CD8-positive, alpha-beta memory T cell (primary cell): ENCODE measurements at regions of chr19 and their contacts with region 1.

Region 1: GRCh38 chr19:40777937-40778705 is at the start of gene RAB4B:
- DNase-seq: peak; percentile 100
- H3K4me3 ChIP-seq: peak within 1 kb of the TSS; percentile 98
- H3K4me3 Mint-ChIP-seq: peak within 1 kb of the TSS; percentile 88 to 98 (median 92)
- H3K27ac ChIP-seq: peak within 1 kb of the TSS; percentile 95
- H3K27ac Mint-ChIP-seq: peak within 1 kb of the TSS; percentile 95 to 99 (median 98)
- H3K4me1 ChIP-seq: peaks cover 31% of the 10 kb centered on the region
- H3K4me1 Mint-ChIP-seq: peaks cover 33 to 46% (median 36%) of the 10 kb centered on the region in 3 donors
- H3K27me3 ChIP-seq: no peaks in the 10 kb centered on the region
- H3K27me3 Mint-ChIP-seq: peaks cover 0 to 1% of the 10 kb centered on the region in 2 donors
- total RNA-seq, gene RAB4B: 24.2 to 27.2 TPM

Region 2: GRCh38 chr19:40716655-40717324 is 61.3 kb before region 1 on chr19 and contains the starts of genes COQ8B and ITPKC:
- CTCF ChIA-PET with region 1: no interaction called
- POLR2A ChIA-PET with region 1: interaction called, 19 read pairs
- DNase-seq: peak; percentile 98 to 100 (median 99)
- H3K4me3 ChIP-seq: peak within 1 kb of the TSS; percentile 99
- H3K4me3 Mint-ChIP-seq: peak within 1 kb of the TSS; percentile 87 to 97 (median 91)
- H3K27ac ChIP-seq: peak within 1 kb of the TSS; percentile 98
- H3K27ac Mint-ChIP-seq: peak within 1 kb of the TSS; percentile 93 to 100 (median 98)
- H3K4me1 ChIP-seq: peaks cover 59% of the 10 kb centered on the region
- H3K4me1 Mint-ChIP-seq: peaks cover 58 to 81% (median 72%) of the 10 kb centered on the region in 3 donors
- H3K27me3 ChIP-seq: no peaks in the 10 kb centered on the region
- H3K27me3 Mint-ChIP-seq: peaks cover 0 to 2% of the 10 kb centered on the region in 2 donors
- total RNA-seq, gene COQ8B: 20.6 to 25.7 TPM
- total RNA-seq, gene ITPKC: 5.5 to 5.7 TPM

Region 3: GRCh38 chr19:40798223-40798996 is 20.3 kb after region 1 on chr19:
- CTCF ChIA-PET with region 1: interaction called, 38 read pairs
- POLR2A ChIA-PET with region 1: interaction called, 72 read pairs
- DNase-seq: peak; percentile 100
- H3K4me3 ChIP-seq: peak overlapping the region; percentile 66
- H3K4me3 Mint-ChIP-seq: peak overlapping the region; percentile 90 to 99 (median 97)
- H3K27ac ChIP-seq: peak overlapping the region; percentile 93
- H3K27ac Mint-ChIP-seq: peak overlapping the region; percentile 98 to 100 (median 100)
- H3K4me1 ChIP-seq: peaks cover 44% of the 10 kb centered on the region
- H3K4me1 Mint-ChIP-seq: peaks cover 36 to 51% (median 41%) of the 10 kb centered on the region in 3 donors
- H3K27me3 ChIP-seq: no peaks in the 10 kb centered on the region
- H3K27me3 Mint-ChIP-seq: no peaks in the 10 kb centered on the region

Region 4: DNA sequence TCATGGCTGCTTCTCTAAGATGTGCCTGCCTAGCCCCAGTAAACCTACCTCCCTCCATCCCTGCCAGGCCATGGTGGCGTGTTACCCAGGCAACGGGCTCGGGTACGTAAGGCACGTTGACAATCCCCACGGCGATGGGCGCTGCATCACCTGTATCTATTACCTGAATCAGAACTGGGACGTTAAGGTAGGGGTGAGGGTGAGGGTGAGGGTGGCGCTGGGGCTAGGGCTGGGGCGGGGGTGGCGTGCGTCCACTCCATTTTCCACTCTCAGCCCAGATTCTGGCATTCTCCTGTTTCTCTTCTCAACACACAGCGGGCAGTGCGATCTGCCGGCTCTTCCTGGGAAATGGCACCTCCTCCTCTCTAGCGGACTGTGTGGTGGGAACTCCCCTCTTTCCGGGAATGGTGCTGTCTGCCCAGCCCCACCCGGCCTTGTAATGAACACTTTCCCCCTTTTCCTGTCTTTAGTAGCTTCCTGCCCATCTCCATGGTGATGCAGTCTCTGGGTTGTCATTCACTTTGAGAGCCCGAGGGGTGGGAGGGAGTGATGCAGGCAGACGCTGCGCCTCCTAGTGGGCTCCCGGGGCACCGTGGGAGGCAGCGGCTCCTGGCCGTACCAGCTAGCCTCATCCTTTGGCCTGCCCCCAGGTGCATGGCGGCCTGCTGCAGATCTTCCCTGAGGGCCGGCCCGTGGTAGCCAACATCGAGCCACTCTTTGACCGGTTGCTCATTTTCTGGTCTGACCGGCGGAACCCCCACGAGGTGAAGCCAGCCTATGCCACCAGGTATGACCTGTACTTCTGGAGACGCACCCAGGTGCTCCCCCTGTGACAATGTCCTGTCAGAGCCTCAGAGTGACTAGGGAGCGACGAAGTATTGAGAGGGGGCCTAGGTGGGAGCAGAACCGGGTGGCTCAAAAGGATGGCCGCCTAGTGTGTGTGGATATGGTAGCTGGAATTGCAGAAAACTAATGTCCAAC is 28.7 kb after region 1 on chr19:
- CTCF ChIA-PET with region 1: interaction called, 38 read pairs
- POLR2A ChIA-PET with region 1: interaction called, 34 read pairs
- DNase-seq: peak; percentile 76 to 86 (median 83)
- H3K4me3 ChIP-seq: peak overlapping the region; percentile 46
- H3K4me3 Mint-ChIP-seq: peak overlapping the region; percentile 60 to 91 (median 82)
- H3K27ac ChIP-seq: peak overlapping the region; percentile 79
- H3K27ac Mint-ChIP-seq: peak overlapping the region; percentile 93 to 100 (median 98)
- H3K4me1 ChIP-seq: peaks cover 80% of the 10 kb centered on the region
- H3K4me1 Mint-ChIP-seq: peaks cover 76 to 86% (median 85%) of the 10 kb centered on the region in 3 donors
- H3K27me3 ChIP-seq: no peaks in the 10 kb centered on the region
- H3K27me3 Mint-ChIP-seq: no peaks in the 10 kb centered on the region

Region 5: DNA sequence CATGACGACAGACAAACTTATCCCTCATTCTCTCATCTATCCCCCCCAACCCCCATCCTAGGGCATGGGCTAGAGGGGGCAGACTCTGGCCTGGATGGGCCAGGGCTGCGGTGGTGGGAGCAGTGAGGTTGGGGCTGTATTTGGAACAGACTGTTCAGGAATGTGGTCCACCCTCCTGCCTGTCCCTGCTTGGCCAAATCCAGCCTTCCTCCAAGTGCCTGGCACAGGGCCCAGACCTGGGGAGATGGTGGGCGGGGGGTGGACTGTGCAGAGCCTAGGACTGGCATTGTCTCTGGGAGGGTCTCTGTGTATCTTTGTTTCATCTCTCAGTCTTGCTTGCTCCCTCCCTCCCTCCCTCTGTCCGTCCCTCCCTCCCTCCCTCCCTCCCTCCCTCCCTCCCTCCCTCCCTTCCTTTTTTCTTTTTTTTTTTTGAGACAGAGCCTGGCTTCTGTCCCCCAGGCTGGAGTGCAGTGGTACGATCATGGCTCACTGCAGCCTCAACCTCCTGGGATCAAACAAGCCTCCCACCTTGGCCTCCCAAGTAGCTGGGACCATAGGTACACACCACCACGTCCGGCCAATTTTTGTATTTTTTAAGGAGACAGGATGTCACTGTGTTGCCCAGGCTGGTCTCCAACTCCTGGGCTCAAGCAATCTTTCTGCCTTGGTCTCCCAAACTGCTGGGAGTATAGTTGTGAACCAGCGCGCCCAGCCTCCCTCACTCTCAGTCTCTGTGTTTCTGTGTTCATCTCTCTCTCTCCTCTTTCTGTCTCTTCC is 35.2 kb after region 1 on chr19:
- CTCF ChIA-PET with region 1: interaction called, 38 read pairs
- POLR2A ChIA-PET with region 1: interaction called, 3 read pairs
- DNase-seq: no peak
- H3K4me3 ChIP-seq: no peak overlapping the region
- H3K4me3 Mint-ChIP-seq: peak overlapping the region in 3 of 7 donors; percentile 87 to 92 (median 90)
- H3K27ac ChIP-seq: no peak overlapping the region
- H3K27ac Mint-ChIP-seq: peak overlapping the region in 6 of 8 donors; percentile 25 to 86 (median 34)
- H3K4me1 ChIP-seq: peaks cover 28% of the 10 kb centered on the region
- H3K4me1 Mint-ChIP-seq: peaks cover 30 to 41% (median 40%) of the 10 kb centered on the region in 3 donors
- H3K27me3 ChIP-seq: no peaks in the 10 kb centered on the region
- H3K27me3 Mint-ChIP-seq: peaks cover 0 to 4% of the 10 kb centered on the region in 2 donors

Region 6: DNA sequence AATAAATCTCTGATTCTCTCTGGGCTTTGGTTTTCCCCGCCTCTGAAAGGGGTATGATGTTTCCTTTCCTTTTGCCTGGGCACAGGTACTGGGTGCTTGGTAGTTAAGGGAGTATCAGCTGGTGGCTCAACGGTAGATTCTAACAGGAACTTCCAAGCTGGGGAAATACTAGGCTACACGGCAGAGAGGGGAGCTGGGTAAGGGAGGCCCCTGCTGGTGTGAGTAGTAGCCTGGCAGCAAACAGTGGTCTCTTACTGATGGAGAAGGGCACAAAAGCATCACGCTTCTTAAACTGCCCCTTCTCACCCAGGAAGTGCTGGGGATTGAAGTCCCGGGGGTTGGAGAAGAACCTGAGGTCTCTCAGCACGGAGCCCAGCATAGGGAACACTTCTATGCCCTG is 130.9 kb after region 1 on chr19:
- CTCF ChIA-PET with region 1: no interaction called
- POLR2A ChIA-PET with region 1: no interaction called
- DNase-seq: peak in 3 of 5 donors; percentile 24 to 53 (median 42)
- H3K4me3 ChIP-seq: peak overlapping the region; percentile 48
- H3K4me3 Mint-ChIP-seq: peak overlapping the region in 6 of 7 donors; percentile 14 to 93 (median 72)
- H3K27ac ChIP-seq: no peak overlapping the region
- H3K27ac Mint-ChIP-seq: peak overlapping the region in 3 of 8 donors; percentile 22 to 85 (median 71)
- H3K4me1 ChIP-seq: peaks cover 7% of the 10 kb centered on the region
- H3K4me1 Mint-ChIP-seq: peaks cover 9 to 12% (median 11%) of the 10 kb centered on the region in 3 donors
- H3K27me3 ChIP-seq: no peaks in the 10 kb centered on the region
- H3K27me3 Mint-ChIP-seq: peaks cover 15 to 45% of the 10 kb centered on the region in 2 donors

Region 7: GRCh38 chr19:40933034-40933433 is 154.9 kb after region 1 on chr19:
- CTCF ChIA-PET with region 1: no interaction called
- POLR2A ChIA-PET with region 1: no interaction called
- DNase-seq: no peak
- H3K4me3 ChIP-seq: no peak overlapping the region
- H3K4me3 Mint-ChIP-seq: no peak overlapping the region
- H3K27ac ChIP-seq: no peak overlapping the region
- H3K27ac Mint-ChIP-seq: no peak overlapping the region
- H3K4me1 ChIP-seq: no peaks in the 10 kb centered on the region
- H3K4me1 Mint-ChIP-seq: no peaks in the 10 kb centered on the region
- H3K27me3 ChIP-seq: no peaks in the 10 kb centered on the region
- H3K27me3 Mint-ChIP-seq: peaks cover 20 to 81% of the 10 kb centered on the region in 2 donors